Gastrocnemius medialis (tissue), 4 donors: ENCODE measurements at regions of chr4 and their contacts with region 1.

Region 1: GRCh38 chr4:55866973-55867574 is 13.6 kb downstream of the EXOC1 start:
- DNase-seq: peak in 1 of 2 donors; percentile 18
- ATAC-seq: peak; percentile 86 to 90
- H3K4me3 ChIP-seq: no peak overlapping the region
- H3K27ac ChIP-seq: peak overlapping the region in 2 of 4 donors; percentile 69
- H3K4me1 ChIP-seq: peaks cover 6 to 11% of the 10 kb centered on the region in 2 donors
- H3K27me3 ChIP-seq: no peaks in the 10 kb centered on the region
- CTCF ChIP-seq: peak; percentile 59 to 85 (median 69)
- POLR2A ChIP-seq: no peak

Region 2: GRCh38 chr4:55546756-55547465 is 320.2 kb before region 1 on chr4 and contains the start of gene CLOCK:
- in situ Hi-C with region 1: loop called in 1 of 4 experiments (anchors 10 kb)
- intact Hi-C with region 1: loop called (anchors 2 kb)
- DNase-seq: peak; percentile 75 to 82
- ATAC-seq: peak; percentile 86 to 87
- H3K4me3 ChIP-seq: peak within 1 kb of the TSS; percentile 81 to 97 (median 93)
- H3K27ac ChIP-seq: peak within 1 kb of the TSS; percentile 98 to 99 (median 98)
- H3K4me1 ChIP-seq: peaks cover 19 to 25% of the 10 kb centered on the region in 2 donors
- H3K27me3 ChIP-seq: no peaks in the 10 kb centered on the region
- CTCF ChIP-seq: peak; percentile 30 to 71 (median 67)
- POLR2A ChIP-seq: peak; percentile 72 to 76
- total RNA-seq, gene CLOCK: 21.9 to 60.7 (median 34.2) TPM